ENCODE measurements at regions of chr1 and their contacts with region 1.

Region 1: GRCh38 chr1:112715264-112716053 is at the start of gene PPM1J:
- DNase-seq: peak; percentile 96
- H3K4me3 Mint-ChIP-seq: peak within 1 kb of the TSS; percentile 75
- H3K27ac Mint-ChIP-seq: no peak within 1 kb of the TSS
- H3K4me1 Mint-ChIP-seq: peaks cover 5% of the 10 kb centered on the region
- H3K27me3 Mint-ChIP-seq: no peaks in the 10 kb centered on the region
- CTCF ChIP-seq: no peak
- total RNA-seq, gene PPM1J: 0.88 and 1.5 TPM in 2 replicates

Region 2: GRCh38 chr1:112515311-112516009 is 200.0 kb before region 1 on chr1:
- CTCF ChIA-PET with region 1: no interaction called
- POLR2A ChIA-PET with region 1: no interaction called
- intact Hi-C with region 1: no loop called
- DNase-seq: peak; percentile 38
- H3K4me3 Mint-ChIP-seq: no peak overlapping the region
- H3K27ac Mint-ChIP-seq: no peak overlapping the region
- H3K4me1 Mint-ChIP-seq: no peaks in the 10 kb centered on the region
- H3K27me3 Mint-ChIP-seq: no peaks in the 10 kb centered on the region
- CTCF ChIP-seq: no peak

Region 3: GRCh38 chr1:112727716-112728115 is 12.3 kb after region 1 on chr1:
- CTCF ChIA-PET with region 1: interaction called, 45 read pairs
- POLR2A ChIA-PET with region 1: interaction called, 3 read pairs
- intact Hi-C with region 1: no loop called
- DNase-seq: no peak
- H3K4me3 Mint-ChIP-seq: no peak overlapping the region
- H3K27ac Mint-ChIP-seq: no peak overlapping the region
- H3K4me1 Mint-ChIP-seq: no peaks in the 10 kb centered on the region
- H3K27me3 Mint-ChIP-seq: no peaks in the 10 kb centered on the region
- CTCF ChIP-seq: no peak

Region 4: GRCh38 chr1:112762541-112763517 is 47.4 kb after region 1 on chr1:
- CTCF ChIA-PET with region 1: interaction called, 44 read pairs
- POLR2A ChIA-PET with region 1: interaction called, 10 read pairs
- intact Hi-C with region 1: no loop called
- DNase-seq: peak; percentile 56
- H3K4me3 Mint-ChIP-seq: peak overlapping the region; percentile 41
- H3K27ac Mint-ChIP-seq: peak overlapping the region; percentile 82
- H3K4me1 Mint-ChIP-seq: peaks cover 32% of the 10 kb centered on the region
- H3K27me3 Mint-ChIP-seq: no peaks in the 10 kb centered on the region
- CTCF ChIP-seq: no peak

Region 5: GRCh38 chr1:112794654-112795239 is 79.3 kb after region 1 on chr1:
- CTCF ChIA-PET with region 1: interaction called, 838 read pairs
- POLR2A ChIA-PET with region 1: interaction called, 3 read pairs
- intact Hi-C with region 1: no loop called
- DNase-seq: no peak
- H3K4me3 Mint-ChIP-seq: no peak overlapping the region
- H3K27ac Mint-ChIP-seq: no peak overlapping the region
- H3K4me1 Mint-ChIP-seq: no peaks in the 10 kb centered on the region
- H3K27me3 Mint-ChIP-seq: no peaks in the 10 kb centered on the region
- CTCF ChIP-seq: no peak

Region 6: GRCh38 chr1:112818990-112819689 is 103.7 kb after region 1 on chr1:
- CTCF ChIA-PET with region 1: interaction called, 11 read pairs
- POLR2A ChIA-PET with region 1: no interaction called
- intact Hi-C with region 1: no loop called
- DNase-seq: no peak
- H3K4me3 Mint-ChIP-seq: no peak overlapping the region
- H3K27ac Mint-ChIP-seq: no peak overlapping the region
- H3K4me1 Mint-ChIP-seq: peaks cover 5% of the 10 kb centered on the region
- H3K27me3 Mint-ChIP-seq: no peaks in the 10 kb centered on the region
- CTCF ChIP-seq: no peak

Region 7: GRCh38 chr1:112955781-112956543 is 240.5 kb after region 1 on chr1 and contains the start of gene SLC16A1:
- CTCF ChIA-PET with region 1: interaction called, 8 read pairs
- POLR2A ChIA-PET with region 1: interaction called, 9 read pairs
- intact Hi-C with region 1: loop called (anchors 1 kb)
- DNase-seq: peak; percentile 93
- H3K4me3 Mint-ChIP-seq: peak within 1 kb of the TSS; percentile 78
- H3K27ac Mint-ChIP-seq: peak within 1 kb of the TSS; percentile 91
- H3K4me1 Mint-ChIP-seq: peaks cover 48% of the 10 kb centered on the region
- H3K27me3 Mint-ChIP-seq: no peaks in the 10 kb centered on the region
- CTCF ChIP-seq: peak; percentile 15
- total RNA-seq, gene SLC16A1: 142 and 148 TPM in 2 replicates

Region 8: GRCh38 chr1:113072757-113073478 is 357.5 kb after region 1 on chr1 and contains the start of gene LRIG2:
- CTCF ChIA-PET with region 1: interaction called, 28 read pairs
- POLR2A ChIA-PET with region 1: interaction called, 30 read pairs
- intact Hi-C with region 1: loop called (anchors 2 kb)
- DNase-seq: peak; percentile 99
- H3K4me3 Mint-ChIP-seq: peak within 1 kb of the TSS; percentile 92
- H3K27ac Mint-ChIP-seq: peak within 1 kb of the TSS; percentile 96
- H3K4me1 Mint-ChIP-seq: peaks cover 15% of the 10 kb centered on the region
- H3K27me3 Mint-ChIP-seq: no peaks in the 10 kb centered on the region
- CTCF ChIP-seq: peak; percentile 88
- total RNA-seq, gene LRIG2: 11.8 and 14.8 TPM in 2 replicates